B cell (primary cell): ENCODE measurements at regions of chr11 and their contacts with region 1.

Region 1: DNA sequence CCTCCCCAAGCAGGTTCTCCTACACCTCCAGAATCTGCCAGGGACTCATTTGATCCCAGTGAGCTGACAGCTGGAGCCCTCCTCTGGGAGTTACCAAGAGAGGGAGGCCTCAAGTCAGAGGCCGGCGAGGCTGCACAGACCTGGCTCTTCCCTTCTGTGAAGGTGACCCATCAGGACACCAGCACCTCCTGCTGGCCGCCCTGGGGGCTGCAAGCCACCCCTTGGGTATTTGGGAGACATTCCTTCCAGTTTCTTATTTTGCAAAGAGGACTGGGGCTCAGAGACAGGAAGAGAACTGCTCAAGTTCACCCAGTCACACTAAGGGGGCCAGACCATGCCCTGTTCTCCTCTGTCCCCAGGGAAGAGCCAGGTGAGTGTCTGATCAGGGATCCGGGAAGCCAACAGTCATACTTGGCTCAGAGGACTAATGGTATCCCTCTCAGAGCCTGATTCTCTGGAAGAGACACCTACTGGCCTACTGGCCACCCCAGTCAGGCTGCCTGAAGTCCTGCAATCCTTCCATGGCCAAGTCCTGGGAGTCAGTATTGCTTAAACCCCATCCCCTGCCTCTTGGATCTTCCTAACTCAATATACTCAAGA is 40.5 kb upstream of the RIC3 start:
- DNase-seq: peak; percentile 73
- ATAC-seq: peak; percentile 49
- H3K4me3 ChIP-seq: no peak overlapping the region
- H3K4me3 Mint-ChIP-seq: no peak overlapping the region
- H3K27ac ChIP-seq: no peak overlapping the region
- H3K27ac Mint-ChIP-seq: peak overlapping the region; percentile 50
- H3K4me1 ChIP-seq: peaks cover 33 to 54% of the 10 kb centered on the region in 2 donors
- H3K4me1 Mint-ChIP-seq: peaks cover 34% of the 10 kb centered on the region
- H3K27me3 ChIP-seq: no peaks in the 10 kb centered on the region
- H3K27me3 Mint-ChIP-seq: no peaks in the 10 kb centered on the region
- CTCF ChIP-seq: peak; percentile 93

Region 2: GRCh38 chr11:7892840-7893254 is 316.5 kb before region 1 on chr11:
- CTCF ChIA-PET with region 1: no interaction called
- POLR2A ChIA-PET with region 1: no interaction called
- intact Hi-C with region 1: loop called (anchors 10 kb)
- DNase-seq: peak; percentile 52
- ATAC-seq: peak; percentile 56
- H3K4me3 ChIP-seq: no peak overlapping the region
- H3K4me3 Mint-ChIP-seq: no peak overlapping the region
- H3K27ac ChIP-seq: no peak overlapping the region
- H3K27ac Mint-ChIP-seq: no peak overlapping the region
- H3K4me1 ChIP-seq: peaks cover 20 to 25% of the 10 kb centered on the region in 2 donors
- H3K4me1 Mint-ChIP-seq: peaks cover 28% of the 10 kb centered on the region
- H3K27me3 ChIP-seq: no peaks in the 10 kb centered on the region
- H3K27me3 Mint-ChIP-seq: peaks cover 4% of the 10 kb centered on the region
- CTCF ChIP-seq: peak; percentile 75

Region 3: DNA sequence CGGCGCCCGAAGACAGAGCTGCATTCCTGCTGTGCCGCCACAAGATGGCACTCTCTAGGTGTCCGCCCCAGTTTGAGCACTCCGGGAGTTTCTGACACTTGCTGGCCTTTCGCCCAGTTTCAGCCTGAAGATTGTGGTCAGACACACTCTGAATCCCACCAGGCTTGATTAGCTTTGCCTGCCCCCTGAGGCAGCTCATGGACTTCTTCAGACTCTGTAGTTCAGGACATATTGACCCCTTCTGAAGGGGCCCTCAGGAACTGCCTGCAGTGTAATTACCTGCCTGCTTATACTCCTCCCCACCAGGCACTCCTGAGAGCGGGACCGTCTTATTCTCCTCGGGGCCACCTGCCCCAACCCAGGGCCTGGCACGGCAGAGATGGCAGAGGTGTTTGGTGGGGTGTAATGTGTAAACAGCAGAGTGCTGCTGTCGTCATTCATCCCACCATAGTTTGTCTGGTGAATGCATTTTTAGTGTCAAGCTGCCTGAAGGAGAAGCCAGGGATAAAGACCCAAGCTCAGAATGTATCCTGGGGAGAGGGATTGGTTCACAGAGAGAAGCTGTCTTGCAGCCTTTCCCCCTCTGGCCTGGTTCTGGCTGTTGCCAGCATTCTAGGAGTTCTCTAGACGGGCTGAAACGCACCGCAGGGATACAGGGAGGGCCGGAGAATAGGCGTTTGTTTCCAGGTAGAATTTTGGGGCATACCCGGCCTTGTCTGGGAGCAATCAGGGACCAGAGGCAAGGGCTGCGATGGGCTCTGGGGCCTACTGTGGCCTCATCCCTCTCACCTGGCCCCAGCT is 175.8 kb before region 1 on chr11:
- CTCF ChIA-PET with region 1: no interaction called
- POLR2A ChIA-PET with region 1: no interaction called
- intact Hi-C with region 1: loop called (anchors 2 kb)
- DNase-seq: peak; percentile 69
- ATAC-seq: peak; percentile 83
- H3K4me3 ChIP-seq: no peak overlapping the region
- H3K4me3 Mint-ChIP-seq: no peak overlapping the region
- H3K27ac ChIP-seq: no peak overlapping the region
- H3K27ac Mint-ChIP-seq: no peak overlapping the region
- H3K4me1 ChIP-seq: peaks cover 0 to 8% of the 10 kb centered on the region in 2 donors
- H3K4me1 Mint-ChIP-seq: peaks cover 6% of the 10 kb centered on the region
- H3K27me3 ChIP-seq: peaks cover 0 to 31% (median 9%) of the 10 kb centered on the region in 4 experiments
- H3K27me3 Mint-ChIP-seq: peaks cover 45% of the 10 kb centered on the region
- CTCF ChIP-seq: peak; percentile 86

Region 4: DNA sequence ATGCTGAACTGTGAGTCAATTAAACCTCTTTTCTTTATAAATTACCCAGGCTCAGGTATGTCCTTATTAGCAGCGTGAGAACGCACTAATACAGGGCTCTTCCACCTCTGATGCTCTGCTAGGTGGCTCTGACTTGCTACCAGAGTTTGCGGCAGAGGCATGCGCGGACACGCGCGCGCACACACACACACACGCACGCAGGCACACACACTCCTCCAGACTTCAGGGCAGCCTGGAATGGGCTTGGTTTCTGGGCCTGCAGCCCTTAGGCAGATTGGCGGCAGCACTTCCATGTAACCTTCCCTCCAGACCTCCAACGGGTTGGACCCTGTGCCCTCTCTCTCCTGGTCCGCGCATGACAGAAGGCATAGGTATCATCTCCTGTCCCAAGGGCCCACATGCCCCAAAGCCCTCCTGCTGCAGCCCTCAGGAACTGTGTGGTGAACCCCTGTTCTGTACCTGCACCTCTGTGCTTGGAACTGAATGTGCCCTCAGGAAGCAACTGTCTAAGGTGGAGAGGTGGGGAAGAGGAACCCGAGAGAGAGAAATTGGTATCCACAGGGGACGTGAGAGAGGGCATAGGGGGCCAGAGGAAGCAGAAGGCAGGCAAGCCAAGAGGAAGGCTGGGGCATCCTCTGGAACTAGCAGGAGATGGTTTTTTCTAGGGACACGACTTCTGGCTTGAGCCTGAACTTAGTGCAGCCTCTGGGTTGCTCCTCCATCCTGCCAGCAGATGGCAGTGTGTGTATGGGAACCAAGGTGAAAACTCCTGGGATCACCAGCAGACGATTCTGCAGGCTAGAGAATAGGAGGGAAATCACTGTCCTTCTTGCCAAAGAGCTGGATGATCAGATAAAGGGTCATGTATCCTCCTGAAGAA is 17.1 kb before region 1 on chr11:
- CTCF ChIA-PET with region 1: interaction called, 327 read pairs
- POLR2A ChIA-PET with region 1: no interaction called
- intact Hi-C with region 1: loop called (anchors 1 kb)
- DNase-seq: peak; percentile 78
- ATAC-seq: peak; percentile 81
- H3K4me3 ChIP-seq: no peak overlapping the region
- H3K4me3 Mint-ChIP-seq: no peak overlapping the region
- H3K27ac ChIP-seq: no peak overlapping the region
- H3K27ac Mint-ChIP-seq: no peak overlapping the region
- H3K4me1 ChIP-seq: peaks cover 12 to 15% of the 10 kb centered on the region in 2 donors
- H3K4me1 Mint-ChIP-seq: peaks cover 13% of the 10 kb centered on the region
- H3K27me3 ChIP-seq: peaks cover 0 to 2% (median 0%) of the 10 kb centered on the region in 4 experiments
- H3K27me3 Mint-ChIP-seq: peaks cover 20% of the 10 kb centered on the region
- CTCF ChIP-seq: peak; percentile 94

Region 5: DNA sequence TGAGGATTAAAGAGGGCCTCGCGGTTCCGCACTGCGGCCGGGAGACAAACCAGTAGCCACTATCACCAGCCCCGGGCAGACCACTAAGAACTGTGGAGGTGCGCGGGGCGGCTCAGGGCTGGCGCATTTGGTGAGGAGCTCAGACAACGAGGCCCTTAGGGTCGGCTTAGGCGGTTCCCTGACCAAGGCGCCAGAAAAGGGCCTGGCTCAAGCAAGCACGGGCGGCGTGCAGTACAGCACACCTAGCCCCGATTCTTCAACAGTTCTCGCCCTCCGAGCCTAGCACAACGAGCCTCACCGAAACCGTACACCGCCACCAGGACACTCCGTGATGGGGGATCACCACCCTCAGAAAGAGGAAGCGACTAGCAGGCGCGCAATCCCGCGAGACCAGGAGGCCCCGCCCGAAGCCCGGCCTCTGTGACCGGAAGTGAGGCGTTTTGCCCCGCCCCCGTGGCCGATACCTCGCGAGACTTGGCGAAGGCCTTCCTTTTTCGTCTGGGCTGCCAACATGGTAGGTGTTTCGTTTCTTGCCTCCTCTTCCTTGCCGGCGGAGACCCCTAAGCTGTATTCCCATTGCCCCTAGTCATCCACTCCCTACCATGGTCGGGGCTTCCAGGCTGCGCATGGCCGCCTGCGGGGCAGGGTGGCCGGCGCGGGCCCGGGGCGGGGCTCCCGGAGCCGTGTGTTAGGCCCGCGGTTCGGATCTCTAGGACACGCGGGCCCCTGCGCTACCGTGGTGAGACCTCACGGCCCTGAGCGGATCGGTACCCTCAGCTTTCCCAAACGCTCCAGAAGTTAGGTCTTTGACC is 473.2 kb after region 1 on chr11 and contains the starts of genes RPL27A and TRIM66:
- CTCF ChIA-PET with region 1: no interaction called
- POLR2A ChIA-PET with region 1: no interaction called
- intact Hi-C with region 1: loop called (anchors 5 kb)
- DNase-seq: peak; percentile 98
- ATAC-seq: peak; percentile 93
- H3K4me3 ChIP-seq: peak within 1 kb of the TSS; percentile 82 to 99 (median 88)
- H3K4me3 Mint-ChIP-seq: peak within 1 kb of the TSS; percentile 94
- H3K27ac ChIP-seq: peak within 1 kb of the TSS; percentile 87 to 98
- H3K27ac Mint-ChIP-seq: peak within 1 kb of the TSS; percentile 97
- H3K4me1 ChIP-seq: peaks cover 25 to 26% of the 10 kb centered on the region in 2 donors
- H3K4me1 Mint-ChIP-seq: peaks cover 41% of the 10 kb centered on the region
- H3K27me3 ChIP-seq: no peaks in the 10 kb centered on the region
- H3K27me3 Mint-ChIP-seq: no peaks in the 10 kb centered on the region
- CTCF ChIP-seq: peak; percentile 18
- total RNA-seq, gene RPL27A: 1,369 and 1,473 TPM in 2 replicates
- total RNA-seq, gene TRIM66: 21.1 and 21.4 TPM in 2 replicates